ENCODE measurements at regions of chr20 and their contacts with region 1.

Region 1: GRCh38 chr20:56629670-56630478 is 768 bp downstream of the TFAP2C start:
- DNase-seq: peak; percentile 28
- ATAC-seq: peak; percentile 45
- H3K4me3 Mint-ChIP-seq: no peak overlapping the region
- H3K27ac Mint-ChIP-seq: no peak overlapping the region
- H3K4me1 Mint-ChIP-seq: peaks cover 12% of the 10 kb centered on the region
- H3K27me3 Mint-ChIP-seq: peaks cover 72% of the 10 kb centered on the region
- CTCF ChIP-seq: peak; percentile 23

Region 2: DNA sequence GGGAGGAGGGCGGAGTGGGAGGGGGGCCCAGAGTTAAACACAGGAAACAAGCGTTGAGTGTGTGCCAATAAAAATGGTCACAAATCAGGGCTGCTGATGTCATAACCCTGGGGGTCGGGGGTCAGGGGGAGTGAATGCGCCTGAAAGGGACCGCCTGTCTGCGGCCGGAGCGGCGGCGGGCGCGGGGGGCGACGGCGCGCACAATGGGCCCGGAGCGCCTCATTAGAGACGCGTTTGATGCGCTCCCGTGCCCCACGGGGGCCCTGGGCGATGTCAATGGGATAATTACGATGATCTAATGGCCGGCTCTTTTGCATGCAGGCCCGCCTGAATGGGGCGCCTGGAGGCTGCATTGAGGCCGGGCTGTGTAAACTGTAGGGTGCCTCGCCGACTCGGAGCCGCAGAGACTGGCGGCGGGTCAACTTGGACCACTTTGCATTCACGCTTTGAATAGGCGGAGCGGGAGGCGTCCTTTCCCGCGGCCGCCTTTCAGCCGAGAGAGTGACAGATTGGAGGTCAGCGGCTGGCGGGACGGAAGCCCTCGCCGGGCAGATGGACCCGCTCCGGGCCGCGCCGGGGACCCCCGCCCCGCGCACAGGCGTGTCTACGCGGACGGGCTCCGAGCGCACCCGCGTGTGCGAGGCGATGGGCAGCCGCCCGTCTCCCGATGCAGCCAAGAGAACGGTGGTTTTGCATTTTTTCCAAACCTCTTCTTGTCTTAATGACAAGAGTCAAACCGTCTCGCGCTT is 295.4 kb after region 1 on chr20:
- CTCF ChIA-PET with region 1: no interaction called
- POLR2A ChIA-PET with region 1: no interaction called
- intact Hi-C with region 1: loop called (anchors 5 kb)
- DNase-seq: no peak
- ATAC-seq: no peak
- H3K4me3 Mint-ChIP-seq: no peak overlapping the region
- H3K27ac Mint-ChIP-seq: no peak overlapping the region
- H3K4me1 Mint-ChIP-seq: peaks cover 6% of the 10 kb centered on the region
- H3K27me3 Mint-ChIP-seq: peaks cover 59% of the 10 kb centered on the region
- CTCF ChIP-seq: no peak